HCT116 (cell line): ENCODE measurements at regions of chr22 and their contacts with region 1.

Region 1: GRCh38 chr22:36481393-36482168 is at the start of gene TXN2:
- DNase-seq: peak; percentile 89
- ATAC-seq: peak; percentile 93
- H3K4me3 ChIP-seq: peak within 1 kb of the TSS; percentile 84 to 99
- H3K27ac ChIP-seq: peak within 1 kb of the TSS; percentile 99
- H3K4me1 ChIP-seq: peaks cover 6 to 13% of the 10 kb centered on the region in 2 experiments
- H3K27me3 ChIP-seq: no peaks in the 10 kb centered on the region
- CTCF ChIP-seq: no peak
- POLR2A ChIP-seq: peak; percentile 58
- RAD21 ChIP-seq: no peak
- total RNA-seq, gene TXN2: 87.0 TPM

Region 2: DNA sequence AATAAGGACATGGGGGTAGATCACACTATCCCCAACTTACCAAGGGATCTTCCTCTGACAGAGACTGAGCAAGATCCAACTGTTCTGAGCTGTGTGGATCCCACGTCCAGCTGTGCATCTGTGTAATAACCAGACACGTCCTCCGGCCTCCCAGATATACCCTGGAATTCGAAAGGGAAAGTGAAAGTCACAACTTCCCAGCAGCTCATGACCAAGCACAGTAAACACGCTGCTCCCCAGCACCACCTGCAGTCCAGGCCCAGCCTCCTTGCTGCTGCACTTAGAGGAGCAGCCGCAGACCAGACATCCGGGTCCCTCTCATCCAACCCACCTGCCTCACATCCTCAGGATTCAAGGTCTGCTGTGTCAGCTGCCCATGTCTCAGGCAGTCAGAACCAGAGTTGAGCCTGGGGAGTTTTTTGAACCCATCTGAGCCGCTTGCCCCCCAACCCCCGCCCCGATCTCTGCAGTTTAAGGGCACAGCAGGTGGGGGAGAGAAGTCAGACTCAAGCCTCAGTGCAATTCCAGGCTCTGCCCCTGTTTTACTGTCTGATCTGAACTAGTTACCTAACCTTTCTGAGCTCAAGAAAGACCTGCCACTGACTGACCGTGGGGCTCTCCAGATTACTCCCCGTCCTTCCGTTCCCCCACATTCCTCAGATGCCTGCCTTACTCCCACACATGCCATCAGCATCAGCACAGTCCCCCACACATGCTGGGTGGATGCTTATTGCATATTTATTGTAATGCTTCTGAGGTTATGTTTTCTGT is 242.0 kb before region 1 on chr22 and contains the start of gene APOL2:
- CTCF ChIA-PET with region 1: interaction called, 5 read pairs
- POLR2A ChIA-PET with region 1: no interaction called
- RAD21 ChIA-PET with region 1: no interaction called
- intact Hi-C with region 1: loop called (anchors 1 kb)
- DNase-seq: peak; percentile 83
- ATAC-seq: peak; percentile 96
- H3K4me3 ChIP-seq: peak within 1 kb of the TSS; percentile 69 to 84
- H3K27ac ChIP-seq: peak within 1 kb of the TSS; percentile 90
- H3K4me1 ChIP-seq: peaks cover 15 to 22% of the 10 kb centered on the region in 2 experiments; a peak in 3 of 4 replicates
- H3K27me3 ChIP-seq: no peaks in the 10 kb centered on the region
- CTCF ChIP-seq: peak in 2 of 3 experiments; percentile 63 to 71; a peak in 4 of 6 replicates
- POLR2A ChIP-seq: peak; percentile 73
- RAD21 ChIP-seq: peak; percentile 37
- total RNA-seq, gene APOL2: 9.9 TPM

Region 3: GRCh38 chr22:36325154-36326031 is 156.2 kb before region 1 on chr22:
- CTCF ChIA-PET with region 1: no interaction called
- POLR2A ChIA-PET with region 1: no interaction called
- RAD21 ChIA-PET with region 1: no interaction called
- intact Hi-C with region 1: no loop called
- DNase-seq: no peak
- ATAC-seq: no peak
- H3K4me3 ChIP-seq: no peak overlapping the region
- H3K27ac ChIP-seq: no peak overlapping the region
- H3K4me1 ChIP-seq: peaks cover 24 to 30% of the 10 kb centered on the region in 2 experiments
- H3K27me3 ChIP-seq: no peaks in the 10 kb centered on the region
- CTCF ChIP-seq: no peak
- POLR2A ChIP-seq: no peak
- RAD21 ChIP-seq: no peak

Region 4: DNA sequence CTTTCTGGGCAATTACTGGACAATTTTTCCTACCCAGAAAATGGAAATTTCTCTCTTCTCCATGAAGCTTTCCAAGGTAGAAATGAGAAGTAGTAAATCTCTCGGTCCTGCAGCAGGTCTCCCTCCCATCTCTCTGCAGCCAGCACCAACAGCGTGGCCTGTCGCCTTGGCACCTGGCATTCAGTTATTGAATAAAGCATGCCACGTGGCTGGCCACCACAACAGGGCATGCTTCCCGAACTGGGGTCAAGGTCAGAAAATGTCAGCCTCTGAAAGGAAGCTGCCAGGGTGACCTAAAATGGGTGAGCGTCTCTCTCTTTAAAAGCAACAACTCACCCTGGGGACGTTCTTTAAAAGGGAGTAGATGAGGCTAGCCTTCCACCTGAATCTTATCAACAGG is 208.0 kb after region 1 on chr22:
- CTCF ChIA-PET with region 1: no interaction called
- POLR2A ChIA-PET with region 1: no interaction called
- RAD21 ChIA-PET with region 1: no interaction called
- intact Hi-C with region 1: no loop called
- DNase-seq: no peak
- ATAC-seq: no peak
- H3K4me3 ChIP-seq: no peak overlapping the region
- H3K27ac ChIP-seq: no peak overlapping the region
- H3K4me1 ChIP-seq: no peaks in the 10 kb centered on the region
- H3K27me3 ChIP-seq: peaks cover 31% of the 10 kb centered on the region; the same call in 1 of the 2 replicates
- CTCF ChIP-seq: no peak
- POLR2A ChIP-seq: no peak
- RAD21 ChIP-seq: no peak

Region 5: DNA sequence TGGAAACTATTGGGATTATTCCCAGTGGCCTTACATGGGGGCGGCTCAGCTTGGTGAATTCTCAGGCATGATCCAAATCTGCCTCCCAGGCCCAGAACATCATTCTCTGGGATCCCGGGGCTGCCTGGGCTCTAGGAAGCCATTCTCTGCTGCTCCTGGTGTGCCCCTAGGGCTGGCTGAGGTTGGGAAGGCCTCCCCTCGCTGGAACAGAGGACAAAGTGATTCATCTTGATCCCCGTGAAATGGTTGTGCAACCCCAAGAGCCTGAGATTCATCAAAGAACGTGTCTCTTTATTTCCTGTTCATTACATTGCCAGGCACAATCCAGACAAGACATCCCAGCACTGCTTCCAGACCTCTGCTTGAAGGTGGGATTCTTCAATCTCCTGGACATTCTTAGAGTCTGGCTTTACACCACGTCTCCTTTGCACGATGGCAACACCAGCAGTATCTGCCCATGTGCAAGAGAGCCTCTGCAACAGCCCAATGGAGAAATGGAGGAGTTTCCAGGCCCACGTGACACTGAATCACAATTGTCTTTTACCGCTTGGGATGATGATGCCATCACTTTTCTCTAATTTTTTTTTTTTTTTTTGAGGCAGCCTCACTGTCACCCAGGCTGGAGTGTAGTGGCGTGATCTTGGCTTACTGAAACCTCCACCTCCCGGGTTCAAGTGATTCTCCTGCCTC is 485.4 kb after region 1 on chr22:
- CTCF ChIA-PET with region 1: no interaction called
- POLR2A ChIA-PET with region 1: no interaction called
- RAD21 ChIA-PET with region 1: interaction called in 1 of 2 experiments, 10 read pairs
- intact Hi-C with region 1: no loop called
- DNase-seq: no peak
- ATAC-seq: no peak
- H3K4me3 ChIP-seq: no peak overlapping the region
- H3K27ac ChIP-seq: no peak overlapping the region
- H3K4me1 ChIP-seq: peaks cover 5 to 17% of the 10 kb centered on the region in 2 experiments
- H3K27me3 ChIP-seq: no peaks in the 10 kb centered on the region
- CTCF ChIP-seq: no peak
- POLR2A ChIP-seq: no peak
- RAD21 ChIP-seq: no peak